Naive thymus-derived CD4-positive, alpha-beta T cell (primary cell): ENCODE measurements at regions of chr13 and their contacts with region 1.

Region 1: DNA sequence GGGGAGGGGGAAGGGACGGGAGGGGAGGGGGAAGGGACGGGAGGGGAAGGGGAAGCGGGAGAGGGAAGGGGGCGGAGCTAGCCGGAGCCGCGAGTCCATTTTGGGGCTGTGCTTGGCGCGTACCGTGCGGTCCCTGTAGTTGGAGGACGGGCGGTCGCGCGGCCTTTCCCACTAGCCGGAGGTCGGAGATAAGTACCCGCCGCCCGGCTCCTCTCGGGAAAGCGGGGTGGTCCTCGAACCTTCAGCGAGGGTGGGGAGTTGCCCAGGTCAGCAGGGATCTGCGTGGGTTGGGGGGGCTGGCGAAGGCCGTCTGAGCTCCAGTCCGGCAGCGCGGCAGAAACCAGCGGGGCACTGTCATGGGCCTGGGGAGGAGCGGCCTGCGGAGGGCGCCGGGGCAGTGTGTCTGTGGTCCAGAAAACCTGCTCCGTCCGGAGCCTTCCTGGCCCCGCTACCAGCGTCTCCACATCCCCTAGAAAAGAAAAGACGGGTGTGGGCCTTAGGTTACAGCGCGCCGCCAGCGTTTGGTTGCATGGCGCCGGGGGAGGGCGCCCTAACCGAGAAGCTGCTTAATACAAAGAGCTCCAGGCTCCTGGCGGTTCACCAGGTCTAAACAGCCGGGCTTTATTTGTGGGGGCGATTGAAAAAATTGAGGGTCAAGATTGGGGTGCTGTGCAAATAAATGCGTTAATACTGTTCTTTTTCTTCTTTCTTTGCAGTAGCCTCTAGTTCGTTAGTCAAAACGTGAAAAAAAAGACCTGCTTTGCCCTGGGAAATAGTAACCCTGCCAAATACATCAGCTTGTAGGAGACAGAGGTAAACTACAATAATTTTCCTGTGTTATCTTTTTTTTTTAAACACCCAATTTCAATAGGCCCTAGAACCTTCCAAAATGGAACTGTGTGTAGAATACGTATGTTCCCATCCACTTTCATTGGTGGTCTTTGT is at the start of gene TRIM13:
- DNase-seq: peak; percentile 64 to 85 (median 82)
- ATAC-seq: peak; percentile 88
- H3K4me3 ChIP-seq: peak within 1 kb of the TSS; percentile 97
- H3K4me3 Mint-ChIP-seq: peak within 1 kb of the TSS; percentile 83 to 95 (median 86)
- H3K27ac ChIP-seq: peak within 1 kb of the TSS; percentile 89
- H3K27ac Mint-ChIP-seq: peak within 1 kb of the TSS; percentile 84 to 92 (median 87)
- H3K4me1 ChIP-seq: peaks cover 25 to 31% of the 10 kb centered on the region in 2 donors
- H3K4me1 Mint-ChIP-seq: peaks cover 16 to 57% (median 49%) of the 10 kb centered on the region in 7 donors
- H3K27me3 ChIP-seq: no peaks in the 10 kb centered on the region
- H3K27me3 Mint-ChIP-seq: no peaks in the 10 kb centered on the region
- total RNA-seq, gene TRIM13: 18.3 to 27.1 (median 21.8) TPM

Region 2: GRCh38 chr13:49669735-49670309 is 327.4 kb before region 1 on chr13:
- CTCF ChIA-PET with region 1: no interaction called
- POLR2A ChIA-PET with region 1: no interaction called
- intact Hi-C with region 1: loop called in 1 of 2 experiments (anchors 1 kb)
- DNase-seq: peak in 2 of 9 donors; percentile 21 to 37
- ATAC-seq: peak; percentile 76
- H3K4me3 ChIP-seq: no peak overlapping the region
- H3K4me3 Mint-ChIP-seq: no peak overlapping the region
- H3K27ac ChIP-seq: no peak overlapping the region
- H3K27ac Mint-ChIP-seq: no peak overlapping the region
- H3K4me1 ChIP-seq: no peaks in the 10 kb centered on the region
- H3K4me1 Mint-ChIP-seq: peaks cover 0 to 10% (median 3%) of the 10 kb centered on the region in 7 donors
- H3K27me3 ChIP-seq: no peaks in the 10 kb centered on the region
- H3K27me3 Mint-ChIP-seq: no peaks in the 10 kb centered on the region

Region 3: DNA sequence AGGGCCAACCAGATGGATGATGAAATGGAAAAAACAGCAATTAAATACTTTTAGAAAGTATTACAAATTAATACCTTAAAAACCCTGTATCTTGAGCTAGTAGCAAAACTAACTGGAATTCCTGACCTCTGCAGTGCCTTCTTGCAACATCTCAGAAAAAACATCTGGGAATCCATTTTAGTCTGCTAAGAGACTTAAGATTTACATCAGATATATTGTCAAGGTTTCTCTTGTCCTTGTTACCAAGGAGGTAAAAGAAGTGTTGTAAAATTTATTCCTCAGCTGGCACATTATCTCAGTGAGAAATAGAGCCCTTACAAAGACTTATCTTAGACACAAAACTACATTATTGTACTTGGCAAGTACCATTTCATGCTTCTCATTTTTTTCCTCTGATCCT is 36.5 kb after region 1 on chr13:
- CTCF ChIA-PET with region 1: interaction called, 4 read pairs
- POLR2A ChIA-PET with region 1: no interaction called
- intact Hi-C with region 1: loop called in 1 of 2 experiments (anchors 5 kb)
- DNase-seq: no peak
- ATAC-seq: no peak
- H3K4me3 ChIP-seq: no peak overlapping the region
- H3K4me3 Mint-ChIP-seq: no peak overlapping the region
- H3K27ac ChIP-seq: no peak overlapping the region
- H3K27ac Mint-ChIP-seq: no peak overlapping the region
- H3K4me1 ChIP-seq: no peaks in the 10 kb centered on the region
- H3K4me1 Mint-ChIP-seq: peaks cover 0 to 5% (median 0%) of the 10 kb centered on the region in 7 donors
- H3K27me3 ChIP-seq: no peaks in the 10 kb centered on the region
- H3K27me3 Mint-ChIP-seq: no peaks in the 10 kb centered on the region

Region 4: GRCh38 chr13:50268500-50268899 is 271.3 kb after region 1 on chr13:
- CTCF ChIA-PET with region 1: no interaction called
- POLR2A ChIA-PET with region 1: no interaction called
- intact Hi-C with region 1: loop called in 1 of 2 experiments (anchors 2 kb)
- DNase-seq: no peak
- ATAC-seq: no peak
- H3K4me3 ChIP-seq: no peak overlapping the region
- H3K4me3 Mint-ChIP-seq: no peak overlapping the region
- H3K27ac ChIP-seq: no peak overlapping the region
- H3K27ac Mint-ChIP-seq: no peak overlapping the region
- H3K4me1 ChIP-seq: no peaks in the 10 kb centered on the region
- H3K4me1 Mint-ChIP-seq: no peaks in the 10 kb centered on the region
- H3K27me3 ChIP-seq: no peaks in the 10 kb centered on the region
- H3K27me3 Mint-ChIP-seq: peaks cover 0 to 52% (median 4%) of the 10 kb centered on the region in 5 donors

Region 5: GRCh38 chr13:50801087-50801931 is 804.1 kb after region 1 on chr13:
- CTCF ChIA-PET with region 1: interaction called, 6 read pairs
- POLR2A ChIA-PET with region 1: no interaction called
- intact Hi-C with region 1: loop called (anchors 1 kb)
- DNase-seq: peak; percentile 13 to 71 (median 56)
- ATAC-seq: peak; percentile 96
- H3K4me3 ChIP-seq: no peak overlapping the region
- H3K4me3 Mint-ChIP-seq: peak overlapping the region in 1 of 10 donors; percentile 39
- H3K27ac ChIP-seq: no peak overlapping the region
- H3K27ac Mint-ChIP-seq: peak overlapping the region in 1 of 9 donors; percentile 20
- H3K4me1 ChIP-seq: peaks cover 0 to 3% of the 10 kb centered on the region in 2 donors
- H3K4me1 Mint-ChIP-seq: peaks cover 0 to 26% (median 6%) of the 10 kb centered on the region in 7 donors
- H3K27me3 ChIP-seq: no peaks in the 10 kb centered on the region
- H3K27me3 Mint-ChIP-seq: peaks cover 0 to 8% (median 0%) of the 10 kb centered on the region in 5 donors

Region 6: GRCh38 chr13:51825165-51825592 is 1828.0 kb after region 1 on chr13:
- CTCF ChIA-PET with region 1: no interaction called
- POLR2A ChIA-PET with region 1: no interaction called
- intact Hi-C with region 1: loop called in 1 of 2 experiments (anchors 5 kb)
- DNase-seq: peak in 7 of 9 donors; percentile 62 to 90 (median 84)
- ATAC-seq: peak; percentile 81
- H3K4me3 ChIP-seq: peak overlapping the region; percentile 75
- H3K4me3 Mint-ChIP-seq: peak overlapping the region; percentile 62 to 100 (median 97)
- H3K27ac ChIP-seq: peak overlapping the region; percentile 85
- H3K27ac Mint-ChIP-seq: peak overlapping the region; percentile 86 to 99 (median 95)
- H3K4me1 ChIP-seq: peaks cover 61 to 78% of the 10 kb centered on the region in 2 donors
- H3K4me1 Mint-ChIP-seq: peaks cover 57 to 80% (median 63%) of the 10 kb centered on the region in 7 donors
- H3K27me3 ChIP-seq: no peaks in the 10 kb centered on the region
- H3K27me3 Mint-ChIP-seq: peaks cover 0 to 10% (median 0%) of the 10 kb centered on the region in 5 donors